ENCODE measurements at regions of chr6 and their contacts with region 1.

Region 1: GRCh38 chr6:56955171-56956045 is 501 bp downstream of the BEND6 start:
- DNase-seq: peak; percentile 89 to 97
- H3K4me3 ChIP-seq: peak overlapping the region; percentile 93
- H3K27ac ChIP-seq: peak overlapping the region; percentile 93
- H3K4me1 ChIP-seq: peaks cover 51% of the 10 kb centered on the region
- H3K27me3 ChIP-seq: no peaks in the 10 kb centered on the region
- CTCF ChIP-seq: peak; percentile 78

Region 2: DNA sequence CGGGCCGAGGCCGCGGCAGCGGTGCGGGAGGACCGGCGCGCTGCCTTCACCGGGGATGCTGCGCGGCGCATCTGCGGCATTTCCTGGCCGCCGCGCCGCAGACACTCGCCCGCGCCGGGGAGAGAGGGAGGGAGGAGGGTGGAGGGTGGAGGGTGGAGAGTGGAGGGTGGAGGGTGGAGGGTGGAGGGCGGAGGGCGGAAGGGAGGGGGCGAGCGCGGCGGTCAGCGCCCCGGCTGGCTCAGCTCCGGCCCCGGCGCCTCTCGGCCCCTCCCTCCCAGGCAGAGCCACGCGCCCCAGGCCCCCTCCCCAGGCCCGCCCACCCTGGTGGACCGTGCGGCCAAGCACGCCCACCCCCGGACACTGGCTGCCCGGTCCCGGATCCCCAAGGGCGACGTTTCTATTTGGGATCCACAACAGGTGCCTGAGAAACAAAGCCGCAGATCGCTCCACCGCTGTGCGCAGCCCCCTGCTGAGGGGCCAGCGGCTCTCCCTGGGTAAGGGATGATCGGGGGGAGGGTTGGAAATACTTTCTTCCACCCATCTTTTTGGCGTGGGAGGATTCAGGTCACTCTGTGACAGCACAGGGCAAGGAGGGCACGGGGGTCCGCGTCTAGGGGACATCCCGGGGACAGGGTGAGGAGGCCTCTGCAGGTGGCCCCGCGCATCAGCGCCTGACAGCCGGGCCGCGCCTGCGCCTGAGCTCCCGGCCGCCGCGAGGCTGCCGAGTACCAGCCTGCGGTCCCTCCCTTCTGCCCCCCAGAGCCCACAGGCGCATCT is 111.6 kb before region 1 on chr6:
- CTCF ChIA-PET with region 1: no interaction called
- POLR2A ChIA-PET with region 1: interaction called, 6 read pairs
- intact Hi-C with region 1: loop called (anchors 2 kb)
- DNase-seq: peak; percentile 76 to 84
- H3K4me3 ChIP-seq: peak overlapping the region; percentile 80
- H3K27ac ChIP-seq: peak overlapping the region; percentile 49; the same call in 1 of the 2 replicates
- H3K4me1 ChIP-seq: peaks cover 41% of the 10 kb centered on the region
- H3K27me3 ChIP-seq: no peaks in the 10 kb centered on the region
- CTCF ChIP-seq: peak; percentile 68; the same call in 1 of the 2 replicates

Region 3: GRCh38 chr6:56902641-56903464 is 52.6 kb before region 1 on chr6:
- CTCF ChIA-PET with region 1: interaction called, 9 read pairs
- POLR2A ChIA-PET with region 1: no interaction called
- intact Hi-C with region 1: loop called (anchors 1 kb)
- DNase-seq: no peak
- H3K4me3 ChIP-seq: no peak overlapping the region
- H3K27ac ChIP-seq: no peak overlapping the region
- H3K4me1 ChIP-seq: peaks cover 19% of the 10 kb centered on the region
- H3K27me3 ChIP-seq: no peaks in the 10 kb centered on the region
- CTCF ChIP-seq: peak; percentile 85

Region 4: DNA sequence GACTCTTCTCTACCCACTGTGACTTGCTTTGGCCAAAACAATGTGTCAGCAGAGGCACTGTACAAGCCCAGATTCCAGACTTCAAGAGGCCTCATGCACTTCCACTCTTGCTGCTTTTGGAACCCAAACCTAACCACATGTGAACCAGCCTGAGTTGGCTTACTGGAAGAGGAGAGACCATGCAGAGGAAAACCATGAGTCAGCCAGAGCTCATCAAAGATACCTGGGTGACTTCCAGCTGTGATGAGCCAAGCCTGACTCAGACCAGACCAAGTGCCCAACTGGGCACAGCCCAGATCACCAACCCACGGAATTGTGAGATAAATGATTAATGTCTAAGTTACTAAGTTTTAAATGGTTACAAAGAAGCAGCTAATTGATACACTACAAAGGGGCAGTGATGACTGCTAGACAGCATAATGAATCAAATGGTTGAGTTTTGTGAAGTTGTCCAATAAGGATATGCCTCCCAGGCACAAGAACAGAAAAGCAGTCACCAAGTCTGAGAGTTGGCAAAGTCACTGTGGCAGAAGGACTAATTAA is 16.7 kb before region 1 on chr6:
- CTCF ChIA-PET with region 1: no interaction called
- POLR2A ChIA-PET with region 1: interaction called, 8 read pairs
- intact Hi-C with region 1: loop called (anchors 2 kb)
- DNase-seq: peak; percentile 73 to 88
- H3K4me3 ChIP-seq: no peak overlapping the region
- H3K27ac ChIP-seq: peak overlapping the region; percentile 58
- H3K4me1 ChIP-seq: peaks cover 20% of the 10 kb centered on the region
- H3K27me3 ChIP-seq: no peaks in the 10 kb centered on the region
- CTCF ChIP-seq: no peak

Region 5: GRCh38 chr6:57075092-57075491 is 119.7 kb after region 1 on chr6:
- CTCF ChIA-PET with region 1: no interaction called
- POLR2A ChIA-PET with region 1: no interaction called
- intact Hi-C with region 1: no loop called
- DNase-seq: no peak
- H3K4me3 ChIP-seq: no peak overlapping the region
- H3K27ac ChIP-seq: no peak overlapping the region
- H3K4me1 ChIP-seq: no peaks in the 10 kb centered on the region
- H3K27me3 ChIP-seq: no peaks in the 10 kb centered on the region
- CTCF ChIP-seq: no peak

Region 6: GRCh38 chr6:57089687-57090460 is 134.5 kb after region 1 on chr6 and contains the start of gene ZNF451:
- CTCF ChIA-PET with region 1: no interaction called
- POLR2A ChIA-PET with region 1: interaction called, 8 read pairs
- intact Hi-C with region 1: loop called (anchors 1 kb)
- DNase-seq: peak; percentile 89 to 97
- H3K4me3 ChIP-seq: peak within 1 kb of the TSS; percentile 52; the same call in 1 of the 2 replicates
- H3K27ac ChIP-seq: no peak within 1 kb of the TSS
- H3K4me1 ChIP-seq: peaks cover 17% of the 10 kb centered on the region
- H3K27me3 ChIP-seq: no peaks in the 10 kb centered on the region
- CTCF ChIP-seq: no peak
- total RNA-seq, gene ZNF451: 31.7 and 50.6 TPM in 2 replicates

Region 7: DNA sequence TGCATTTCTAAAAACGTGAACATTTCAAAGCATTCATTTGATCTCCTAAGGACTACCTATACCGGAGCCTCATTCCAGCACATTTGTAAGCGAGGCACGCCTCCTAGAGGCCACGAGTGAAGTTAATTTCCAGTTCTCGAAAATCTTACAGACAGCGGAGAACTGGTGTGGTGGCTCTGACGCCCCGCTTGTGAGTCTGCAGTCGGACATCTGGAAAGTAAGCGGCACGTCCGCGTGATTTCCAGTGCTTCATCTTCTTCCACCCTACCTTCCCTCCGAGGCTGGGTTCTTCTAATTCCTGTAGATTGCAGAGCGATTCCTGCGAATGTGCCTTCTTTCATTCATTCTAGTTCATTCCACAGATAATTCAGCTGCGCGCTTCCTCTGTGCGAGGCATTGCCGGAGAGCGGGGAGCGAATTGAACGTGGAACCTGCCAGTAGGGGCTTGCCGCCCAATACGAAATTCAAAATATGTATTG is 361.2 kb after region 1 on chr6:
- CTCF ChIA-PET with region 1: interaction called, 3 read pairs
- POLR2A ChIA-PET with region 1: interaction called, 3 read pairs
- intact Hi-C with region 1: loop called (anchors 1 kb)
- DNase-seq: peak; percentile 84 to 85
- H3K4me3 ChIP-seq: peak overlapping the region; percentile 90
- H3K27ac ChIP-seq: no peak overlapping the region
- H3K4me1 ChIP-seq: peaks cover 22% of the 10 kb centered on the region
- H3K27me3 ChIP-seq: no peaks in the 10 kb centered on the region
- CTCF ChIP-seq: peak; percentile 92

Measured in PC-9 (cell line).